ENCODE measurements at regions of chr17 and their contacts with region 1.

Region 1: GRCh38 chr17:12431188-12431587 is 234.5 kb upstream of the MYOCD start:
- DNase-seq: peak; percentile 67
- CTCF ChIP-seq: no peak

Region 2: GRCh38 chr17:12269747-12270146 is 161.4 kb before region 1 on chr17:
- in situ Hi-C with region 1: no loop called
- DNase-seq: no peak
- CTCF ChIP-seq: no peak

Region 3: DNA sequence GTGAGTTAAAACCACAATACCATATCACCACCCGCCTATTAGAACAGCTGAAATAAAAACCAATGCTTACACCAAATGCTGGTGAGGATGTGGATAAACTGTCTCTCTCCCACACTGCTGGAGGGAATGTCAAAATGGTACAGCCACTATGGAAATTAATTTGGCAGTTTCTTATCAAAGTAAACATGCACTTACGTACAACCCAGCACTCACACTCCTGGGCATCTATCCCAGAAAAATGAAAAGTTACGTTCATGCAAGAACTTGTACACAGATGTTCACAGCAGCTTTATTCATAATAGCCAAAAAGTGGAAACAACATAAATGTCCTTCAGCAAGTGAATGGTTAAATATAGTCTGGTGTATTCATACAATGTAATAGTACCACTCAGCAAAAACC is 61.3 kb after region 1 on chr17:
- in situ Hi-C with region 1: no loop called
- DNase-seq: no peak
- CTCF ChIP-seq: no peak

Region 4: GRCh38 chr17:13017659-13018459 is 586.7 kb after region 1 on chr17 and contains the start of gene ELAC2:
- in situ Hi-C with region 1: loop called (anchors 25 kb)
- DNase-seq: peak; percentile 97
- CTCF ChIP-seq: no peak

Measured in GM13976 (cell line).